Activated CD4-positive, alpha-beta T cell treated with anti-CD3 and anti-CD28 coated beads for 36 hours (primary cell): ENCODE measurements at regions of chr2 and their contacts with region 1.

Region 1: DNA sequence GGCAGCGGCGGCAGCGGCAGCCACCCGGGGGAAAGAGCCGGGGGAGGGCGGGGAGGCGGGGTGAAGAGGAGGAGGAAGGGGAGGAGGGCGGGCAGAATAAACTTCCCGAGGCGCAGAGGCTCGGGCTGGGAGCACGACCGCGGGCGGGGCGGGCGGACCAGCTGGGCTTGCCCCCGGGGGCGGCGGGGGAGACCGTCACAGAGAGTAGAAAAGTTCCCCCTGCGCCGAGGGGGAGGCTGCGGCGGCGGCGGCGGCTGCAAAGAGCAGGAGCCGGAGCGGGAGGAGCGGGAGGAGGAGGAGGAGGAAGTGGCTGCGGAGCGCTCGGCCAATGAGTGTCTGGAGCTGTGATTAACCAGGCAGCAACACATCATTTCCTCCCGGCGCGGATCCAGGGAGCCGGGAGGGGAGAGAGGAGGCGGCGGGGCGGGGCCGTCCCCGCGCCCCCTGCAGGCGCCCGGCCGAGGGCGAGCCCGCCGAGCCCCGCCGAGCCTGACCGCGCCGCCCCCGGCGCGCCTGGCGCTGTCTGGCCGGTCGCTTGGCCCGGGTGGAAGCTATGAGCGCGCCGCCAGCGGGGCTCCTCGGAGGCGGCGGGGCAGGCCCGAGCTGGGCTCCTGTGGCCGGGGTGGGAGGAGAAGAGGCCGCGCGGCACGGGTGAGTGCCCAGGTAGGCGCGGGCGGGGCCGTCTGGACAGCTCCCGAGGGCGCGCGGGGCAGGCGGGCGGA is at the start of gene ACVR1:
- DNase-seq: peak; percentile 93
- ATAC-seq: peak; percentile 90
- H3K4me3 Mint-ChIP-seq: peak within 1 kb of the TSS; percentile 89
- H3K27ac Mint-ChIP-seq: peak within 1 kb of the TSS; percentile 91
- H3K4me1 Mint-ChIP-seq: peaks cover 55% of the 10 kb centered on the region
- H3K27me3 Mint-ChIP-seq: no peaks in the 10 kb centered on the region
- total RNA-seq, gene ACVR1: 17.1 to 23.0 TPM

Region 2: GRCh38 chr2:156986337-156986988 is 889.8 kb before region 1 on chr2:
- CTCF ChIA-PET with region 1: no interaction called
- POLR2A ChIA-PET with region 1: no interaction called
- intact Hi-C with region 1: no loop called
- DNase-seq: no peak
- ATAC-seq: no peak
- H3K4me3 Mint-ChIP-seq: no peak overlapping the region
- H3K27ac Mint-ChIP-seq: no peak overlapping the region
- H3K4me1 Mint-ChIP-seq: no peaks in the 10 kb centered on the region
- H3K27me3 Mint-ChIP-seq: no peaks in the 10 kb centered on the region

Region 3: GRCh38 chr2:157413326-157414035 is 462.7 kb before region 1 on chr2:
- CTCF ChIA-PET with region 1: no interaction called
- POLR2A ChIA-PET with region 1: no interaction called
- intact Hi-C with region 1: loop called in 1 of 2 experiments (anchors 5 kb)
- DNase-seq: peak; percentile 64
- ATAC-seq: peak; percentile 67
- H3K4me3 Mint-ChIP-seq: peak overlapping the region; percentile 63
- H3K27ac Mint-ChIP-seq: peak overlapping the region; percentile 100
- H3K4me1 Mint-ChIP-seq: peaks cover 89% of the 10 kb centered on the region
- H3K27me3 Mint-ChIP-seq: no peaks in the 10 kb centered on the region

Region 4: GRCh38 chr2:157784169-157784822 is 91.9 kb before region 1 on chr2:
- CTCF ChIA-PET with region 1: interaction called, 4 read pairs
- POLR2A ChIA-PET with region 1: no interaction called
- intact Hi-C with region 1: loop called (anchors 2 to 5 kb)
- DNase-seq: peak; percentile 42
- ATAC-seq: peak; percentile 71
- H3K4me3 Mint-ChIP-seq: no peak overlapping the region
- H3K27ac Mint-ChIP-seq: peak overlapping the region; percentile 51
- H3K4me1 Mint-ChIP-seq: peaks cover 49% of the 10 kb centered on the region
- H3K27me3 Mint-ChIP-seq: no peaks in the 10 kb centered on the region

Region 5: GRCh38 chr2:157857881-157858280 is 18.3 kb before region 1 on chr2:
- CTCF ChIA-PET with region 1: interaction called, 6 read pairs
- POLR2A ChIA-PET with region 1: interaction called, 4 read pairs
- intact Hi-C with region 1: loop called in 1 of 2 experiments (anchors 1 kb)
- DNase-seq: no peak
- ATAC-seq: no peak
- H3K4me3 Mint-ChIP-seq: no peak overlapping the region
- H3K27ac Mint-ChIP-seq: peak overlapping the region; percentile 11
- H3K4me1 Mint-ChIP-seq: peaks cover 32% of the 10 kb centered on the region
- H3K27me3 Mint-ChIP-seq: no peaks in the 10 kb centered on the region

Region 6: DNA sequence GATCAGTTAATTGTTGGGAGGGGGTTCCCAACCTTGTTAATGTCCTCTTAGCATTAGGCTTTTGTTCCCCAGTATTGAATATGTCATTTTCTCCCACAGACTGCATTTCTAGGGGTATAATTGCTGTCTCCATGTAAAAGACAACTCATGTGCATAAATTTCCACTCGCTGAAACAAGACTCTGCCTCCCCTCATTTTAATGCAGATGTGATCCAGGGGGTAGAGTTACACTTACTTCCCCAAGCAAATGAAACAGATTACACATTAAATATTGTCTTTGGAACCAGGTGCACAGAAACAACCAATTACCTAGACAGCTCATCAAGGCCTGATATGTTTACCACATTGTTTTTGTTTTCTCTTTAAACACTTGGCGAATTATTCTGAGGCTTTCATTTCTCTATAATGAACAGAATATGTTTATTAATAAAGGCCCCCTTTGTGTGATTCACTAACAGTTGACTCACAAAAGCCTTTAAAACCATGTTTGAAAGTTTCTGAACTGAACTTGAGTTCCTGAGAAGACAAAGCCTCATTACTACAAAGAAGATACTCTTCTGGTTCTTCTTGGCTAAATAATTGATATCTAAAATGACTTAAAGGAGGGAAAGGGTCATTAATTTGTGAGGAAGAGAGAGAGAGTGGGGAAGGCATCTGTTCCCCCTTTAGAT is 14.9 kb after region 1 on chr2:
- CTCF ChIA-PET with region 1: interaction called, 16 read pairs
- POLR2A ChIA-PET with region 1: interaction called, 6 read pairs
- intact Hi-C with region 1: no loop called
- DNase-seq: no peak
- ATAC-seq: no peak
- H3K4me3 Mint-ChIP-seq: no peak overlapping the region
- H3K27ac Mint-ChIP-seq: peak overlapping the region; percentile 86
- H3K4me1 Mint-ChIP-seq: peaks cover 64% of the 10 kb centered on the region
- H3K27me3 Mint-ChIP-seq: no peaks in the 10 kb centered on the region

Region 7: GRCh38 chr2:158099716-158100115 is 223.5 kb after region 1 on chr2:
- CTCF ChIA-PET with region 1: no interaction called
- POLR2A ChIA-PET with region 1: no interaction called
- intact Hi-C with region 1: no loop called
- DNase-seq: no peak
- ATAC-seq: no peak
- H3K4me3 Mint-ChIP-seq: no peak overlapping the region
- H3K27ac Mint-ChIP-seq: no peak overlapping the region
- H3K4me1 Mint-ChIP-seq: no peaks in the 10 kb centered on the region
- H3K27me3 Mint-ChIP-seq: no peaks in the 10 kb centered on the region